HepG2 (cell line): ENCODE measurements at regions of chr11 and their contacts with region 1.

Region 1: GRCh38 chr11:20089796-20090653 is 70.2 kb downstream of the DBX1 start:
- DNase-seq: peak; percentile 32
- ATAC-seq: no peak
- H3K4me3 ChIP-seq: no peak overlapping the region
- H3K27ac ChIP-seq: peak overlapping the region; percentile 20
- H3K4me1 ChIP-seq: peaks cover 41% of the 10 kb centered on the region
- H3K27me3 ChIP-seq: no peaks in the 10 kb centered on the region
- CTCF ChIP-seq: no peak
- EP300 ChIP-seq: no peak
- POLR2A ChIP-seq: no peak
- RAD21 ChIP-seq: no peak

Region 2: GRCh38 chr11:19912958-19913892 is 176.8 kb before region 1 on chr11:
- CTCF ChIA-PET with region 1: no interaction called
- POLR2A ChIA-PET with region 1: no interaction called
- in situ Hi-C with region 1: no loop called
- intact Hi-C with region 1: loop called (anchors 2 kb)
- DNase-seq: peak; percentile 36
- ATAC-seq: peak; percentile 59
- H3K4me3 ChIP-seq: peak overlapping the region; percentile 29 to 47 (median 47); a peak in 5 of 6 replicates
- H3K27ac ChIP-seq: peak overlapping the region; percentile 93
- H3K4me1 ChIP-seq: peaks cover 81% of the 10 kb centered on the region
- H3K27me3 ChIP-seq: no peaks in the 10 kb centered on the region
- CTCF ChIP-seq: no peak
- EP300 ChIP-seq: no peak
- POLR2A ChIP-seq: no peak
- RAD21 ChIP-seq: no peak